ENCODE measurements at regions of chr6 and their contacts with region 1.

Region 1: GRCh38 chr6:25088513-25088912 is 152.8 kb upstream of the RIPOR2 start:
- DNase-seq: no peak

Region 2: GRCh38 chr6:25103603-25104002 is 15.1 kb after region 1 on chr6:
- intact Hi-C with region 1: no loop called
- DNase-seq: no peak

Region 3: DNA sequence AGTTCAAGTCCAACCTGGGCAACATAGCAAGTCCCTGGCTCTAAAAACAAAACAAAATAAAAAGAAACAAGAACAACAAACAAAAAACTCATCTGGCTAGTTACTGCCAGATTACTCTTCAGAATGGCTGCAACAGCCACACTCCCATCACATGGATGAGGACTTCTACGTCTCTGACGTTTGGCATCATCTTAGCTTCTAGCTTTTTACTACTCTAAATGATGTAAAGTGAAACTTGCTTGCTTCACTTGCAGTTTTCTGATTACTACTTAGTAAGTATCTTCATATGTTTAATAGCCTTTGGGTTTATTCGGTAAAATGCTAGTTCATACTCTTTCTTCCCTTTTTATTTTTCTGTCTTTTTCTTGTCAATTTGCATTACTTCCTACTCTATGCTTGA is 29.5 kb after region 1 on chr6:
- intact Hi-C with region 1: loop called (anchors 1 kb)
- DNase-seq: no peak